CD8-positive, alpha-beta memory T cell (primary cell): ENCODE measurements at regions of chr7 and their contacts with region 1.

Region 1: DNA sequence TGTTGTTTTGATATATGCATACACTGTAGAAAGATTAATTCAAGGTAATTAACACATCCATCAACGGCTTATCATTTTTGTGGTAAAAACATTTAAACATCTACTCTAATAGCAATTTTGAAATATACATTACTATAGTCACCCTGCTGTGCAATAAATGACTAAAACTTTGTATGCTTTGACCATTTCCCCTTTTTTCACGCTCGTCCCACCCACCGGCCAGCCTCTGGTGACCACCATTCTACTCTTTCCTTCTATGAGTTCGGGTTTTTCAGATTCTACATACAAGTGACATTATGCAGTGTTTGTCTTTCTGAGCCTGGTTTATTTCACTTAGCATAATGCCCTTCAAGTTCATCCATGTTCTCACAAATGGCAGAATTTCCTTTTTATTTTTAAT is 21.3 kb downstream of the CYCS start:
- DNase-seq: no peak
- H3K4me3 ChIP-seq: no peak overlapping the region
- H3K4me3 Mint-ChIP-seq: no peak overlapping the region
- H3K27ac ChIP-seq: no peak overlapping the region
- H3K27ac Mint-ChIP-seq: no peak overlapping the region
- H3K4me1 ChIP-seq: no peaks in the 10 kb centered on the region
- H3K4me1 Mint-ChIP-seq: no peaks in the 10 kb centered on the region
- H3K27me3 ChIP-seq: peaks cover 4% of the 10 kb centered on the region
- H3K27me3 Mint-ChIP-seq: peaks cover 0 to 17% of the 10 kb centered on the region in 2 donors

Region 2: DNA sequence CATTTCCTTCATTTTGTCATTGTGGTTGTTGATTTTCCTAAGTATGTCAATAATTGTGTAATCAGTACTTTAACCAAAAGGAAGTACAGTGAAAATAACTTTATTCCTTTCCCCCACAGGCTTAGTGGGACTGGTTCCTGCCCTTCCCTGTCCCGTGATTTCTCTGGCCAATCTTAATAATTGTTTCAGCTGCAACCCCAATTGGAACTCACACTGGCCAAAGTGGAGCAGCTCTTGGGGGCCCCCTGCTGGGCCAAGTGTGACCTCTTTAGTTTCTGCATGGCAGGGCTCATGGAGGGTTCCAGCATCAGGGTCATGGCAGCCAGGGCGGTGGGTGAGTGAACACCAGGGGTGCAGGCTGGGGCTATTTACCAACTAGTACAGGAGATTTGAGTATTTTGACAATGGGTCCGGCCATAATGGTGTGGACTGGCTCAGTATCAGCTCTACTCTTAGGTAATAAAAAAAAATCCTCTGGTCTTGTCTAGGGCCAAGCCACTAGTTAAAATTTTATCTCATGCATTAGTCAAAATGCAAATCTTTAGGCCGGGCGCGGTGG is 10.4 kb before region 1 on chr7:
- CTCF ChIA-PET with region 1: interaction called, 10 read pairs
- POLR2A ChIA-PET with region 1: no interaction called
- DNase-seq: peak; percentile 57 to 78 (median 62)
- H3K4me3 ChIP-seq: no peak overlapping the region
- H3K4me3 Mint-ChIP-seq: no peak overlapping the region
- H3K27ac ChIP-seq: no peak overlapping the region
- H3K27ac Mint-ChIP-seq: no peak overlapping the region
- H3K4me1 ChIP-seq: no peaks in the 10 kb centered on the region
- H3K4me1 Mint-ChIP-seq: peaks cover 6 to 11% (median 8%) of the 10 kb centered on the region in 3 donors
- H3K27me3 ChIP-seq: no peaks in the 10 kb centered on the region
- H3K27me3 Mint-ChIP-seq: peaks cover 1 to 2% of the 10 kb centered on the region in 2 donors